ENCODE measurements at regions of chr5 and their contacts with region 1.

Region 1: DNA sequence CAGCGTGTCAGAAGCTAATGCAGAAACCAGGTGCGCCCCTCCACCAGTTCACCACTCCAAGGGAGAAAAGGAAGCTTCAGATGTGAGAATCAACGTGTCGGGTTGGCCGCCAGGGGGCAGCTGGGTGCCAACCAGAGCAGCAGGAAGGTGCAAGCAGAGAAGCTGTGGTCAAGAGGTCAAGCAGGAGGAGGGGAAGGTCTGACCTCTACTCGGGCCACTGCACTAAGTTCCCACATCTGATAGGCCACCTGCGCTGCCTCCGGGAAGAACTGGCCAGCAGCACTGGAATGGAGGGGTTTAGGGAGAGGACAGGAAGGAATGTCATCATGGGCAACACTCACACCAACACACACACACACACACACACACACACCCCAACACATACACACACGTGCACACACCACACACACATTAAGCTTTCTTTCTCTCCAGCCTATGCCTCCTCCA is 31.4 kb downstream of the ANXA6 start:
- DNase-seq: peak; percentile 73
- CTCF ChIP-seq: peak; percentile 94

Region 2: GRCh38 chr5:151086905-151087360 is 39.3 kb before region 1 on chr5:
- CTCF ChIA-PET with region 1: interaction called, 17 read pairs
- POLR2A ChIA-PET with region 1: interaction called, 3 read pairs
- DNase-seq: peak; percentile 82
- CTCF ChIP-seq: no peak

Region 3: DNA sequence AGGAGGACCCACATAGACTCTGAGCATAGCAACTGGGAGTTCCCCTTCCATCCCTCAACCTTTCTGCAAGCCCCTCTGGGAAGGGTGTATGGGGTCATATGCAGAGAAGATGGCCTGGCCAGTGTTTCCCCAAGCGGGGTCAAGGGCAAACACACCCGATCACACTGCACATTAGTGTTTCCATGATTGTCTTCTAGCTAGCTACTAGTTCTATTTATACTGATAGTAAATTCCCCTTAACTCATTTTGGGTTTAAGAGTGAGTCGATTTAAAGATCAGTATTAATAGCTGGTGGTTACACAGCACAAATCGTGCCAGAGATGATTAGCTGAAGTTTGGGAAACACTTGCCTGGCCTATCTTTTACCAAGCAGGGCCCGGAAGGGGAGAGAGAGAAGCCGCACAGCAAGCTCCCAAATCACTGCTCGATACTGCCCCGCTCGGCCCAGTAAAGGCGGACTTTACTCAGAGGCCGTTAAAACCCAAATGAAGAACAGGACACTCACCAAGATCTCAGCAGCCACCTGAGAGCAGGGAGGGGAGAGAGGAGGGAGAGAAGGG is 16.0 kb before region 1 on chr5:
- CTCF ChIA-PET with region 1: interaction called, 145 read pairs
- POLR2A ChIA-PET with region 1: interaction called, 4 read pairs
- DNase-seq: no peak
- CTCF ChIP-seq: peak; percentile 14

Region 4: GRCh38 chr5:151157426-151158286 is 31.4 kb after region 1 on chr5 and contains the start of gene ANXA6:
- CTCF ChIA-PET with region 1: interaction called, 304 read pairs
- POLR2A ChIA-PET with region 1: no interaction called
- DNase-seq: peak; percentile 81
- CTCF ChIP-seq: no peak

Region 5: GRCh38 chr5:151239237-151239861 is 113.1 kb after region 1 on chr5:
- CTCF ChIA-PET with region 1: interaction called, 10 read pairs
- POLR2A ChIA-PET with region 1: no interaction called
- DNase-seq: peak; percentile 73
- CTCF ChIP-seq: no peak